Activated T-helper 2 cell treated with anti-CD3 and anti-CD28 coated beads, Interferon-gamma antibody, Interleukin-2, Interleukin-4, amounts not matched to agents 10 μg/mL and 5 μg/mL and 100 μg/mL, durations not matched to agents 14 hours and 24 hours and 36 hours (primary cell): ENCODE measurements at regions of chr10 and their contacts with region 1.

Region 1: DNA sequence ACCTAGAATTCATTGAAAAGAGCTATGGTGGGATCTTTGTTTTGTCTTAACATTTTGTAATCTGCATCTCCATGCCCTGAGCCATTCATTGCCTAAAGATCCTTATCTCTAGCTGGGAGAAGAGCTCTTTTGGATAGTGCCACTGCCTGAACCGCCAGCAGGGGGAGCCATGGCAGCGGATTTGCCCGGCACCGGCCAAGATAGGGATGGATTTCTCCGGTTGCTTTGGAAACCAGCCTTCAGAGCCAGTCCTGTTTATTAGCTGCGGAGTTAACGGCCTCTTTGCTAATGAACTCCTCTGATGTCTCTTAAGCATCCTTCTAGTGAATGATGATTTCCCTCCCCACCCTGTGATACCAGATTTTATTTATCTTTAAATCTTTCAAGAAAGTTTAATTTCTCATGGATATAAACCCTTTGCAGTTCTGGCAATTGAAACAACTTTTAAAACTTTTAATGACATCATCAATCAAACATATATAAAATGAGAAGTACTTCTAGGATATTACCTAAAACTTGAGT is 58.2 kb upstream of the LYZL2 start:
- DNase-seq: peak; percentile 62
- H3K4me3 Mint-ChIP-seq: no peak overlapping the region
- H3K27ac Mint-ChIP-seq: peak overlapping the region; percentile 92
- H3K4me1 Mint-ChIP-seq: peaks cover 75% of the 10 kb centered on the region
- H3K27me3 Mint-ChIP-seq: no peaks in the 10 kb centered on the region

Region 2: GRCh38 chr10:30645340-30645827 is 42.4 kb before region 1 on chr10:
- intact Hi-C with region 1: loop called (anchors 1 kb)
- DNase-seq: no peak
- H3K4me3 Mint-ChIP-seq: peak overlapping the region; percentile 40
- H3K27ac Mint-ChIP-seq: peak overlapping the region; percentile 50
- H3K4me1 Mint-ChIP-seq: peaks cover 40% of the 10 kb centered on the region
- H3K27me3 Mint-ChIP-seq: peaks cover 24% of the 10 kb centered on the region

Region 3: DNA sequence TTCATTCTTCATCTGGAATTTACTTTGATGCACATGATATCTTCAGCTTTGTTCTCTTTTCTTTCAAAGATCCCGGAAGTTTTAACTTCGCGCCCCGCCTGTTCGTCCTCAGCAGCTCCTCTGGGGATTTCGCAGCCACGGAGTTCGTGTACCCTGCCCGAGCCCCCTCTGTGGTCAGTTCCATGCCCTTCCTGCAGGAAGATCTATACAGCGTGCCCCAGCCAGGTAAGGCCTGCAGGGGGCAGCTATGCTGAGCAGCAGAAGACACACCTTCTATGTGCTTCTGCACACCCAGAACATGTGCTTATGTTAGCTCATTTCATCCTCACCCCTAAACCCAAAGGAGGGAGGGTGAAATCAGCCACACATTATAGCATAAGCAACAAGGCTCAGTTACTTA is 21.5 kb after region 1 on chr10:
- intact Hi-C with region 1: loop called (anchors 2 kb)
- DNase-seq: no peak
- H3K4me3 Mint-ChIP-seq: no peak overlapping the region
- H3K27ac Mint-ChIP-seq: peak overlapping the region; percentile 57
- H3K4me1 Mint-ChIP-seq: peaks cover 28% of the 10 kb centered on the region
- H3K27me3 Mint-ChIP-seq: no peaks in the 10 kb centered on the region